Activated naive CD4-positive, alpha-beta T cell treated with anti-CD3 and anti-CD28 coated beads for 36 hours (primary cell): ENCODE measurements at regions of chr3 and their contacts with region 1.

Region 1: DNA sequence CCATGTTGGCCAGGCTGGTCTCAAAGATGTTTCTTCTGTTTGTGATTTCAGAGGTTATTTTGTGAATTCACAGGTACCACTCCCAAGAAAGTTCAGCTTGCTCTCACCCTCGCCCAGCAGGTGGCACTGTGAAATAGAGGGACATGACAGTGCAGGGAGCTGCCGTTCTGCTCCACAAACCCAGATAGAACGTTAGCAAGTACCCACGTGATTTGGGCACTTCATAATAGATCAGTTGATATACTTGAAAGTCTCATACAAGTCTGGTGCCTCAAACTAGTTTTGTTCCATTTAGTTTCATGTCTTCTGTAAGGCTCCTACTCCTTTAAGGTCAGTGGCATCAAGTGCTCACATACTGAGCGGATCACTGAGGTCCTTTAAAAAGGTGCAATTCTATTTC is 45.5 kb downstream of the FILIP1L start:
- DNase-seq: peak; percentile 90
- H3K4me3 Mint-ChIP-seq: no peak overlapping the region
- H3K27ac Mint-ChIP-seq: no peak overlapping the region
- H3K4me1 Mint-ChIP-seq: peaks cover 30% of the 10 kb centered on the region
- H3K27me3 Mint-ChIP-seq: no peaks in the 10 kb centered on the region

Region 2: DNA sequence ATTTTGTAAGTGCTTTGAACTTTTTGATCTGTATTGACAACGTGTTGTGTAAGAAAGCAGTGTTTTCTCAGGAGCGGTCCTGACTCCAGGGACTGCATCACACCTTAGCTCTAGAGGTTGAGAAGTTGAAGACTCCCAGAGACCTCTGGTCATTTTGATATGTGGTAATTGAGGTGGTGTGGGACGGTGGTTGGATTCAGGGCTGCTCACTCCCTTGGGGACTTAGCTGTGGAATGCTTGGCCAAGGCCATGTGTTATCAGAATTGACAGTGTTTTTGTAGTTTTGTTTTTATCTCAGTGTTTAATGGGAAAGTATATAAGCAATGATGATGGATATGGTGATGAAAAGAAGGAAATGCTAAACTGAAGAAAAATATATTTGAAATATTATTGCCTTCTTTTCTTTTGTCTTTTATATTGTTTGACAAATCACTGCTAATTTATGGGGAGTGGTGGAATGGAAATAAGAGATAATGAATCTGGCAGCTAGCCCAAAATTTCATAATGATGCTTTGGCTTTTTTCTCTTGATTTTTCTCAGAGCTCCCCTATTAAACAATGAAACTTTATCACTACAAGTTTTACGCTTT is 235.1 kb before region 1 on chr3:
- CTCF ChIA-PET with region 1: interaction called, 7 read pairs
- intact Hi-C with region 1: loop called (anchors 1 kb)
- DNase-seq: no peak
- H3K4me3 Mint-ChIP-seq: no peak overlapping the region
- H3K27ac Mint-ChIP-seq: no peak overlapping the region
- H3K4me1 Mint-ChIP-seq: peaks cover 12% of the 10 kb centered on the region
- H3K27me3 Mint-ChIP-seq: no peaks in the 10 kb centered on the region

Region 3: DNA sequence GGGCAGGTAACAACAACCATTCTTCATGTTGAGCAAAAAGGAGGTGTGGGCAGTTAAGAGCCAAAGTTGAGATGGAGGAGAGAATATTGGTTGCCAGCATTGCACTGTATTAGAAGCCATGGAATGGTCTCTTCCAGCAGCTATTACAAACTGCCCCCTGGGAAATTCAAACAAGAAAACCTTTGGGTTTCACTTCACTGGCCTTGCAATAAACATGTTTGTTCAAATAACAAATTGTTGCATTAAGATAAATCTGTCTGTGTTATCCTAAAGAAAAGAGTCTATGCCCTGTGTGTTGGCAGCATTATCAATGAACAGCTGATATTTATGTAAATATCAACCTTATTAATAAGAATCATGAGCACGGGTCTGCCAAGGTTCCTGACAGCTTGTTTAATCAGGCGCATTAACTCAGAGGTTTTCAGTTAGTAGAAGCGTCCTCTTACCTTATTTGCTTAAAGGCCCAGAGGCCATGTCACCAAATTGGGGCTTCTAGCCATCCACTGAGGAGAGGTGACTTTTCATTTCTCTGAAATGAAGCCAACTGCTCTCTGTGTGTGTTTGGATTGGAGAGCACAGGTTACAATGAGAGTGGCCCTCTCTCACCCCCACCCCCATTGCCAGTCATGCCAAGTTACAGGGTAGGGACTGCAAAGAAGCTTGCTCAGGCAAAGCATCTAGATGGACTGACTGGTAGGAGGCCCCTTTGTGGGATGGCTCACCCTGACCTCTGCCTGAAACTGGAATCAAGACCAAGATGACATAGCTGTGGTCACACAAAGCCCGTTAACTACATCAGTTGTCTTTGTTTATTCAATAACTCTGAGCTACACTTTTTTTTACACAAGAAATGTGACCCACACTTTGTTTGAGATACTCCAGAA is 35.0 kb after region 1 on chr3:
- CTCF ChIA-PET with region 1: interaction called, 14 read pairs
- intact Hi-C with region 1: loop called (anchors 2 kb)
- DNase-seq: no peak
- H3K4me3 Mint-ChIP-seq: no peak overlapping the region
- H3K27ac Mint-ChIP-seq: no peak overlapping the region
- H3K4me1 Mint-ChIP-seq: peaks cover 24% of the 10 kb centered on the region
- H3K27me3 Mint-ChIP-seq: no peaks in the 10 kb centered on the region

Region 4: DNA sequence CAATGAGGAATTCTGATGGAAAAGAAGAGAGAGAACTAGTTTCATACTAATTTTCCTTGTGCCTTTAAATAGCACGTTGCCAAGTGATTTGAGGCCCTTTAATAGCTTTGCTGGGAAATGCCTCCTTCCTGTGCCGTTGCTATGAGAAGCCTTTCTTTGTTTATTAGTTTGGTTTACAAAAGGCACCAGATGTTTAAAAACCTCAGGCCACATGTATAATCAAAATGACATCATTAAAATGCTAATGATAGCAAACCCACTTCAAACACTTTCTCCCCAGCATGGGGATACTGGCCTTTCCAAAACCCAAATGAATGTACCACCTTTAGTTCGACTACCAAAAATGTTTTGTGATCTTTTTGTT is 141.9 kb after region 1 on chr3:
- CTCF ChIA-PET with region 1: no interaction called
- intact Hi-C with region 1: no loop called
- DNase-seq: peak; percentile 8
- H3K4me3 Mint-ChIP-seq: no peak overlapping the region
- H3K27ac Mint-ChIP-seq: no peak overlapping the region
- H3K4me1 Mint-ChIP-seq: peaks cover 15% of the 10 kb centered on the region
- H3K27me3 Mint-ChIP-seq: peaks cover under 1% of the 10 kb centered on the region

Region 5: GRCh38 chr3:100254168-100254777 is 185.4 kb after region 1 on chr3:
- CTCF ChIA-PET with region 1: interaction called, 46 read pairs
- intact Hi-C with region 1: loop called (anchors 1 kb)
- DNase-seq: peak; percentile 65
- H3K4me3 Mint-ChIP-seq: no peak overlapping the region
- H3K27ac Mint-ChIP-seq: no peak overlapping the region
- H3K4me1 Mint-ChIP-seq: peaks cover 13% of the 10 kb centered on the region
- H3K27me3 Mint-ChIP-seq: no peaks in the 10 kb centered on the region